Naive thymus-derived CD4-positive, alpha-beta T cell (primary cell): ENCODE measurements at regions of chrX and their contacts with region 1.

Region 1: DNA sequence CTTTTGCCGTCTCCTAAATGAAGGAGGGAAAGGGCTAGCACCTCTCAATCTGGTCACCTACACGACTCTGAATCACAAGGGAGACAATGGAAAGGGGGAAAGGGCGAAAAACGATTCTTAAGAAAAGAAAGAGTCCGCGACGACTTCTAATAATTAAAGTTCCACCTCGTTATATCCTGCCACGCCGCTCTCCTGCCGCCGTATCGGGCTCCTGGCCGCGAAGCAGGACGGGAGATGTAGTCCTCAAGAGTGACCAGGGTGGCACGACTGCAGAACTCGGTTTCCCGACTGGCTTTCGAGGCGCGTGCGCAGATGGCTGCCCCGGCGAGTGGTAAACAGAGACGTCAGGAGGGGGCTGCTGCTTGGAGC is at the start of gene FOXO4:
- DNase-seq: peak; percentile 69 to 91 (median 82)
- ATAC-seq: peak; percentile 92
- H3K4me3 ChIP-seq: peak within 1 kb of the TSS; percentile 70
- H3K4me3 Mint-ChIP-seq: peak within 1 kb of the TSS; percentile 90 to 100 (median 96)
- H3K27ac ChIP-seq: peak within 1 kb of the TSS; percentile 85
- H3K27ac Mint-ChIP-seq: peak within 1 kb of the TSS; percentile 91 to 97 (median 95)
- H3K4me1 ChIP-seq: peaks cover 20 to 21% of the 10 kb centered on the region in 2 donors
- H3K4me1 Mint-ChIP-seq: peaks cover 11 to 40% (median 32%) of the 10 kb centered on the region in 7 donors
- H3K27me3 ChIP-seq: no peaks in the 10 kb centered on the region
- H3K27me3 Mint-ChIP-seq: peaks cover 0 to 6% (median 0%) of the 10 kb centered on the region in 5 donors
- total RNA-seq, gene FOXO4: 11.9 to 40.6 (median 30.0) TPM

Region 2: DNA sequence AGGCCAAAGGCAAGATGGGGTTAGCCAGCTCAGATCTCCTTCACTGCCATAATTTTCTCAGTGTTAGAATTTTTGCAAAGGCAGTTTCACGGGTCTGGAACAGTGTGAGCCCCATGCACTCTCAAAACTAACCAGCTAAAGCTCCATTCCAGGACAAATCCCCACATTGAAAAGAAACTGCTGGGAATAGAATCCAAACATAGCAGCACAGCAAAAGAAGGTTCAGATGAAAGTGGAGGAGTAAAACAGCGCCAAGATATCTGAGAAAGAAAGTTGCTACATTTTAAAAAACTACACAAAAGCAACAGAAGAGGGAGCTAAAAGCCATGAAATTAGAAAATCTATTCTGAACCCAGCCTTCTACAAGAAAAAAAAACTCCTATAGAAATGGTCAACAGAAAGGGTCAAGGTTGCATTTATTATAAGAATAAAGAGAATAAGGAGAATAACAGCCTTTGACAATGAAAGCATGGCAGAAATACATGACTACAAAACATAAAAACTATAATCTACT is 125.0 kb before region 1 on chrX:
- CTCF ChIA-PET with region 1: no interaction called
- POLR2A ChIA-PET with region 1: no interaction called
- intact Hi-C with region 1: loop called in 1 of 2 experiments (anchors 2 kb)
- DNase-seq: peak in 5 of 9 donors; percentile 1 to 26 (median 6)
- ATAC-seq: no peak
- H3K4me3 ChIP-seq: no peak overlapping the region
- H3K4me3 Mint-ChIP-seq: peak overlapping the region in 7 of 10 donors; percentile 2 to 57 (median 25)
- H3K27ac ChIP-seq: no peak overlapping the region
- H3K27ac Mint-ChIP-seq: no peak overlapping the region
- H3K4me1 ChIP-seq: no peaks in the 10 kb centered on the region
- H3K4me1 Mint-ChIP-seq: peaks cover 0 to 8% (median 3%) of the 10 kb centered on the region in 7 donors
- H3K27me3 ChIP-seq: no peaks in the 10 kb centered on the region
- H3K27me3 Mint-ChIP-seq: peaks cover 0 to 3% (median 0%) of the 10 kb centered on the region in 5 donors

Region 3: DNA sequence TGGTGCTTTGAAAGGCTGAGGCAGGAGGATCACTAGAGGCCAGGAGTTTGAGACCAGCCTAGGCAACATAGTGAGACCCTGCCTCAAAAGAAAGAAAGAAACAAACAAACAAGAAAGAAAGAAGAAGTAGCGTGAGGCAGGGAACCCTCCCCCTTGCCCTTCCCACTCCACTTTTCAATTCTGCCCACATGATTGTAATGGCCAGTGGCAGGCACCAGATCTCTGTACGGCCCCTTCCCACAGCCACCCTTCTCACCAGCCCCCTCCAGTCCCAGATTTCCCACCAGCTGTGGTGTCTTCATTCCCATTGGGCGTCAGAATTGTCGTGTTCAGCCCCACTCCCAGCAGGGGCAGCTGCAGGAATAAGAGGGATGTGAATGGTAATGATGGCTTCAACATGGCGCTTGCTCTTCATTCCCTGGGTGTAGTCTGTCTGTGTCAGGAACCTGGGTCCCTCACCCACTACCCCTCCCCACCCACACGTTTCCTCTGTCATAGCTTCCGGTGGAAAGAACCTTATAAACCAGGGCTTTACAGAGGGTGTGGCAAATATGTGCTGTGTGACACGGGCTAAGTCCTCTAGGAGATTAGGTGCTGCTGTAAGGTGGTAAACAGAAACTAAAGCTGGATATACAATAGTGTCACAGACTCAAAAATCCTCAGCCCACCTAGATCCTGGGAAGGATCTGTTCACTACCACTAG is 15.8 kb after region 1 on chrX and contains the start of gene IL2RG:
- CTCF ChIA-PET with region 1: interaction called, 23 read pairs
- POLR2A ChIA-PET with region 1: interaction called, 117 read pairs
- intact Hi-C with region 1: loop called (anchors 1 kb)
- DNase-seq: peak; percentile 37 to 92 (median 87)
- ATAC-seq: peak; percentile 95
- H3K4me3 ChIP-seq: peak within 1 kb of the TSS; percentile 80
- H3K4me3 Mint-ChIP-seq: peak within 1 kb of the TSS; percentile 93 to 98 (median 98)
- H3K27ac ChIP-seq: peak within 1 kb of the TSS; percentile 96
- H3K27ac Mint-ChIP-seq: peak within 1 kb of the TSS; percentile 96 to 100 (median 98)
- H3K4me1 ChIP-seq: peaks cover 28 to 39% of the 10 kb centered on the region in 2 donors
- H3K4me1 Mint-ChIP-seq: peaks cover 24 to 69% (median 43%) of the 10 kb centered on the region in 7 donors
- H3K27me3 ChIP-seq: no peaks in the 10 kb centered on the region
- H3K27me3 Mint-ChIP-seq: no peaks in the 10 kb centered on the region
- total RNA-seq, gene IL2RG: 228 to 671 (median 329) TPM

Region 4: DNA sequence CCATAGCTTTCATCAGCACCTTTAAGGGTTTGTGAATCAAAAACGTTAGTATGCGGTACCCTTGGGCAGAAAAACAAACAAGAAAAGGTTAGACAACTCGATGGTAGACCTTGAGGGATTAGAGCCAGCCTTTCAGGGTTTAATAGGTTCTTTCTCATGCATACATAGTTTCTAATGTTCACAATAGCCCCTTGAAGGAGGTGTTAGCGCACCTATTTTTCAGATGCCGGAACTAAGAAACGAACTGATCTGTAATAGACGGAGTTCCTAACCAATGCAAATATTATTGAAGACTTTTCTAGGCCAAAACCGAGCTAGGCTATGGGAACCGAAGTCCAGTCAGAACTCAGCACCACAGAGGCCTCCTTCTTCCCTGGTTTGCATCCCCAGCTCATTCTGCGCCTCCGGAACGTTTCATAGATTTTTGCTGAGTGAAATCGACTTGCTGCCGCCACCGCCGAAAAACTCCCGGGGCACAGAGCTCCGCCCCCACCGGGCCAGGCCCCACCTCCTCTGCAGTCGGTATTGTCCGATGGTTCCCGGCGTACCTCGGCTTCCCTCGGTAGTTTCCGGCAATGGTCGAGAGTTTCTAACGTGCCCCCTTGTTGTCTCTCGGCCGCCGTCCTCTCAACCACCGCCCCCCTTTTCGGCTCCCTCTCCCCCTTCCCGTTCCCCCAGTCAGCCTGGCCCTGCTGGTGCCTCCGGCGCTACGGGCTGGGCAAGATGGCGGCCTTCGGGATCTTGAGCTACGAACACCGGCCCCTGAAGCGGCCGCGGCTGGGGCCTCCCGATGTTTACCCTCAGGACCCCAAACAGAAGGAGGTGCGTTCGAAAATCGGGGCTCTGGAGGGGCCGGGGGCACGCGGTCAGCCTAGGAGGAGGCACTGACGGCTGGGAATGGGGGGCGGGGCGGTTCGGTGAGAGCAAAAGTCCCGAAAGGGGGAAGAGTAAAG is 22.8 kb after region 1 on chrX and contains the start of gene MED12:
- CTCF ChIA-PET with region 1: interaction called, 15 read pairs
- POLR2A ChIA-PET with region 1: interaction called, 125 read pairs
- intact Hi-C with region 1: loop called in 1 of 2 experiments (anchors 1 kb)
- DNase-seq: peak; percentile 59 to 83 (median 75)
- ATAC-seq: peak; percentile 96
- H3K4me3 ChIP-seq: peak within 1 kb of the TSS; percentile 87
- H3K4me3 Mint-ChIP-seq: peak within 1 kb of the TSS; percentile 81 to 93 (median 86)
- H3K27ac ChIP-seq: peak within 1 kb of the TSS; percentile 93
- H3K27ac Mint-ChIP-seq: peak within 1 kb of the TSS; percentile 84 to 95 (median 92)
- H3K4me1 ChIP-seq: peaks cover 9 to 13% of the 10 kb centered on the region in 2 donors
- H3K4me1 Mint-ChIP-seq: peaks cover 10 to 43% (median 24%) of the 10 kb centered on the region in 7 donors
- H3K27me3 ChIP-seq: no peaks in the 10 kb centered on the region
- H3K27me3 Mint-ChIP-seq: no peaks in the 10 kb centered on the region
- total RNA-seq, gene MED12: 71.1 to 104 (median 77.4) TPM

Region 5: GRCh38 chrX:71128915-71129765 is 33.6 kb after region 1 on chrX:
- CTCF ChIA-PET with region 1: interaction called, 59 read pairs
- POLR2A ChIA-PET with region 1: interaction called, 105 read pairs
- intact Hi-C with region 1: loop called (anchors 1 kb)
- DNase-seq: peak; percentile 52 to 81 (median 71)
- ATAC-seq: peak; percentile 95
- H3K4me3 ChIP-seq: no peak overlapping the region
- H3K4me3 Mint-ChIP-seq: peak overlapping the region; percentile 5 to 76 (median 51)
- H3K27ac ChIP-seq: peak overlapping the region; percentile 48
- H3K27ac Mint-ChIP-seq: peak overlapping the region; percentile 53 to 88 (median 78)
- H3K4me1 ChIP-seq: peaks cover 0 to 14% of the 10 kb centered on the region in 2 donors
- H3K4me1 Mint-ChIP-seq: peaks cover 12 to 28% (median 15%) of the 10 kb centered on the region in 7 donors
- H3K27me3 ChIP-seq: no peaks in the 10 kb centered on the region
- H3K27me3 Mint-ChIP-seq: no peaks in the 10 kb centered on the region

Region 6: GRCh38 chrX:71254092-71254941 is 158.8 kb after region 1 on chrX and contains the start of gene ZMYM3:
- CTCF ChIA-PET with region 1: no interaction called
- POLR2A ChIA-PET with region 1: no interaction called
- intact Hi-C with region 1: loop called in 1 of 2 experiments (anchors 1 kb)
- DNase-seq: peak; percentile 46 to 87 (median 78)
- ATAC-seq: peak; percentile 89
- H3K4me3 ChIP-seq: peak within 1 kb of the TSS; percentile 79
- H3K4me3 Mint-ChIP-seq: peak within 1 kb of the TSS; percentile 76 to 97 (median 90)
- H3K27ac ChIP-seq: peak within 1 kb of the TSS; percentile 91
- H3K27ac Mint-ChIP-seq: peak within 1 kb of the TSS; percentile 87 to 96 (median 91)
- H3K4me1 ChIP-seq: peaks cover 0 to 20% of the 10 kb centered on the region in 2 donors
- H3K4me1 Mint-ChIP-seq: peaks cover 0 to 30% (median 18%) of the 10 kb centered on the region in 7 donors
- H3K27me3 ChIP-seq: no peaks in the 10 kb centered on the region
- H3K27me3 Mint-ChIP-seq: no peaks in the 10 kb centered on the region
- total RNA-seq, gene ZMYM3: 21.2 to 34.1 (median 21.6) TPM

Region 7: GRCh38 chrX:71283403-71284143 is 188.0 kb after region 1 on chrX and contains the start of gene NONO:
- CTCF ChIA-PET with region 1: no interaction called
- POLR2A ChIA-PET with region 1: no interaction called
- intact Hi-C with region 1: loop called (anchors 1 kb)
- DNase-seq: peak; percentile 48 to 96 (median 89)
- ATAC-seq: peak; percentile 91
- H3K4me3 ChIP-seq: peak within 1 kb of the TSS; percentile 88
- H3K4me3 Mint-ChIP-seq: peak within 1 kb of the TSS; percentile 94 to 99 (median 98)
- H3K27ac ChIP-seq: peak within 1 kb of the TSS; percentile 93
- H3K27ac Mint-ChIP-seq: peak within 1 kb of the TSS; percentile 97 to 100 (median 99)
- H3K4me1 ChIP-seq: peaks cover 0 to 8% of the 10 kb centered on the region in 2 donors
- H3K4me1 Mint-ChIP-seq: peaks cover under 1 to 28% (median 17%) of the 10 kb centered on the region in 7 donors
- H3K27me3 ChIP-seq: no peaks in the 10 kb centered on the region
- H3K27me3 Mint-ChIP-seq: peaks cover 0 to 3% (median 0%) of the 10 kb centered on the region in 5 donors
- total RNA-seq, gene NONO: 334 to 488 (median 371) TPM

Region 8: DNA sequence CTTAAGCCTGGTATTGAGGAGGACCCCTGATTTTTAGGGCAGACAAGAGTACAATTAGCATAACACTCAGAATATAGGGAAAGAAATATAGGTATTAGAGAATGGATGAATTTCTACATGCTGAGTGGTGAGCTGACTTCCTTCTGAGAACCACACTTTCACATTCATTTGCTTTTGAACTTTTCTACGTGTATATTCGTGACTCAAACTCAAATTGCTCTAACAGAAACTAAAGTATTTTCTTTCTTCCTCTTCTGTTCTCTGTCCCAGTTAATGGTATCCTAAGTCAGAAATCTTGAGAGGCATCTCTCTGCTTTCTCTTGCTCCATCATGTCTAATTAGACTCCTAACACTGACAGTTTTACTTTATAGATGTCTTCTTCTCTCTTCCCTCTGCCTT is 1313.4 kb after region 1 on chrX:
- CTCF ChIA-PET with region 1: no interaction called
- POLR2A ChIA-PET with region 1: no interaction called
- intact Hi-C with region 1: no loop called
- DNase-seq: no peak
- ATAC-seq: no peak
- H3K4me3 ChIP-seq: no peak overlapping the region
- H3K4me3 Mint-ChIP-seq: no peak overlapping the region
- H3K27ac ChIP-seq: no peak overlapping the region
- H3K27ac Mint-ChIP-seq: no peak overlapping the region
- H3K4me1 ChIP-seq: no peaks in the 10 kb centered on the region
- H3K4me1 Mint-ChIP-seq: peaks cover 0 to 11% (median 0%) of the 10 kb centered on the region in 7 donors
- H3K27me3 ChIP-seq: no peaks in the 10 kb centered on the region
- H3K27me3 Mint-ChIP-seq: no peaks in the 10 kb centered on the region